PC-3 (cell line): ENCODE measurements at regions of chr20 and their contacts with region 1.

Region 1: GRCh38 chr20:3470627-3471396 is at the start of gene ATRN:
- DNase-seq: peak; percentile 91
- ATAC-seq: peak; percentile 85
- H3K4me3 ChIP-seq: peak within 1 kb of the TSS; percentile 87
- H3K27ac ChIP-seq: no peak within 1 kb of the TSS; the same call in 1 of the 2 replicates
- H3K4me1 ChIP-seq: peaks cover 12% of the 10 kb centered on the region
- H3K27me3 ChIP-seq: peaks cover 10% of the 10 kb centered on the region; the same call in 1 of the 2 replicates
- CTCF ChIP-seq: no peak
- total RNA-seq, gene ATRN: 26.1 and 29.6 TPM in 2 replicates

Region 2: DNA sequence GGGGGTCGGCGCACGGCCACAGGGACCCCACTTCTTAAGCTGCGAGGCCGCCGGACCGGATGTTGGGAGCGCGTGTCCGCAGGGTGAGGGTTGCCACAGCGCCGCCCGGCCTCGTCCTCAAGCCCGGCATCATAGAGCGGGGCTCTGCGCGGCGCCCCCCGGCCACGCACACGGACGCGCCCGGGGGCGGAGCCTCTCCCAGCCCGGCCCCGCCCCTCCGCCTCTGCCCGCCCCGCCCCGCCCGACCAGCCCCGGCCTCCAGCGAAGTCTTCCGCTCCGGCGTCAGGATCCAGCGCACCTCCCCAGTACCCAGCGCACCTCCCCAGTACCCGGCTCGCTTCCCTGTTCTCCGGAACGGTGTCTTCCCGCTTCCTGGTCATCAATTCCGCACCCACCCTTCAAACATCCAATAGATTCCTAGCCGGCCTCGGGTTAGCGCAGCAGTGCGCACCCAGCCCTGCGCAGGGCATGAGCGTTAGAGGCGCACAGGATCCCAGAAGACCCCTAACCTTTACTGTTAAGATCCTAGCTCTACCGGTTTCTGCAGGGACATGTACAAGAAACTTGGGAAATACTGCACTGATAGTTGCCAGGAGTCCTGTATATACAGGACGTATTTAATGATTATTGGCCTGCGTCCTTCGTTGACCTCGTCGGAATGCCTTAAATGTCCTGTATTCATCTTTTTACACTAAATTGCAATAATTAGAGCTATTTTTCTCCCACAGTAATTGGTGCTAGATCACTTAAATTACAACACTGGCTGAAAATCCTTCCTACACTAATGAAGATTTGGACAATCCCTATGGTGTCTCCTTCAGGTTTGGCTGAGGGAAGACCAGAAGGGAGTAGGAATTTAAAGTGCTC is 62.8 kb before region 1 on chr20:
- CTCF ChIA-PET with region 1: no interaction called
- POLR2A ChIA-PET with region 1: no interaction called
- intact Hi-C with region 1: loop called (anchors 5 kb)
- DNase-seq: peak; percentile 74
- ATAC-seq: peak; percentile 68
- H3K4me3 ChIP-seq: peak overlapping the region; percentile 73
- H3K27ac ChIP-seq: no peak overlapping the region
- H3K4me1 ChIP-seq: 0 out of 2 replicates have a peak, but pooled peaks cover 17% of the 10 kb centered on the region
- H3K27me3 ChIP-seq: no peaks in the 10 kb centered on the region
- CTCF ChIP-seq: no peak

Region 3: DNA sequence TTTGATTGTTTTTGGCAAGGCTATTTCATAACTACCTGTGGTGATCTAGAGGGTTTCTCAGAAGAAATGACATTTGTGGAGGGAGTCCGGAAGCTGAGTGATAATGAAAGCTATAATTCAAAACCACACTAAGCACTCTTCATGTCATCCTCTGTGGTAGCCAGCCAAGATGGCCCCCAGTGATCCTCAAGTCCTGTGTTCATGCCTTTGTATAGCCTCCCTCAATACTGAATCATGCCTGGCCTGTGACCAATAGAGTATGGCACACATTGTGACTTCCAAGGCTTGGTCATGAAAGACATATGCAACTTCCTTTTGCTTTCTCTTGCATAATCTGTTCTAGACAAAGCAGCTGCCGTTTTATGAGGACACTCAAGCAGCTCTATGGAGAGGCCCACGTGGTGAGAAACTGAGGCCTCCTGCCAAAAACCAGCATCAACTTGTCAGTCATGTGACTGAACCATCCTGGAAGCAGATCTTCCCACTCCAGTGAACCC is 50.6 kb before region 1 on chr20:
- CTCF ChIA-PET with region 1: no interaction called
- POLR2A ChIA-PET with region 1: no interaction called
- intact Hi-C with region 1: no loop called
- DNase-seq: peak; percentile 23
- ATAC-seq: no peak
- H3K4me3 ChIP-seq: no peak overlapping the region
- H3K27ac ChIP-seq: no peak overlapping the region
- H3K4me1 ChIP-seq: no peaks in the 10 kb centered on the region
- H3K27me3 ChIP-seq: no peaks in the 10 kb centered on the region
- CTCF ChIP-seq: no peak